Caco-2 (cell line): ENCODE measurements at regions of chr11 and their contacts with region 1.

Region 1: DNA sequence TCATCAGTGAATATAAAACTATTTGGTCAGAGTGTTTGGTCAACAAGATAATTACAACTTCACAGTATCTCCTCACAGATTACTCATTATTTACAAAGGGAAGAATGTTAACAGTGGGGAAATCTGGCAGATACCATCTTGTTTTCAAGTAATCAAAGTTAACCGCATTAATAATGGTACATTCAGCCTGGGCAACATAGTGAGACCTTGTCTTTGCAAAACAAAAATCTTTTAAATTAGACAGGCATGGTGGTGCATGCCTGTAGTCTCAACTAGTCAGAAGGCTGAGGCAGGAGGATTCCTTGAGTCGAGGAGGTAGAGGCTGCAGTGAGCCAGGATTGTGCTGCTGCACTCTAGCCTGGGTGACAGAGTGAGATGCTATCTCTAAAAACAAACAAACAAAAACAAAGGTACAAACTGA is 78.5 kb downstream of the ACER3 start:
- DNase-seq: no peak
- H3K4me3 ChIP-seq: no peak overlapping the region
- H3K4me3 Mint-ChIP-seq: no peak overlapping the region
- H3K27ac Mint-ChIP-seq: no peak overlapping the region
- H3K4me1 ChIP-seq: peaks cover 9% of the 10 kb centered on the region
- H3K4me1 Mint-ChIP-seq: peaks cover 30% of the 10 kb centered on the region
- H3K27me3 ChIP-seq: no peaks in the 10 kb centered on the region
- H3K27me3 Mint-ChIP-seq: no peaks in the 10 kb centered on the region
- CTCF ChIP-seq: no peak

Region 2: GRCh38 chr11:76850815-76851214 is 88.4 kb before region 1 on chr11:
- CTCF ChIA-PET with region 1: no interaction called
- POLR2A ChIA-PET with region 1: no interaction called
- intact Hi-C with region 1: no loop called
- DNase-seq: no peak
- H3K4me3 ChIP-seq: no peak overlapping the region
- H3K4me3 Mint-ChIP-seq: no peak overlapping the region
- H3K27ac Mint-ChIP-seq: no peak overlapping the region
- H3K4me1 ChIP-seq: peaks cover 11% of the 10 kb centered on the region
- H3K4me1 Mint-ChIP-seq: peaks cover 11% of the 10 kb centered on the region
- H3K27me3 ChIP-seq: no peaks in the 10 kb centered on the region
- H3K27me3 Mint-ChIP-seq: no peaks in the 10 kb centered on the region
- CTCF ChIP-seq: no peak

Region 3: DNA sequence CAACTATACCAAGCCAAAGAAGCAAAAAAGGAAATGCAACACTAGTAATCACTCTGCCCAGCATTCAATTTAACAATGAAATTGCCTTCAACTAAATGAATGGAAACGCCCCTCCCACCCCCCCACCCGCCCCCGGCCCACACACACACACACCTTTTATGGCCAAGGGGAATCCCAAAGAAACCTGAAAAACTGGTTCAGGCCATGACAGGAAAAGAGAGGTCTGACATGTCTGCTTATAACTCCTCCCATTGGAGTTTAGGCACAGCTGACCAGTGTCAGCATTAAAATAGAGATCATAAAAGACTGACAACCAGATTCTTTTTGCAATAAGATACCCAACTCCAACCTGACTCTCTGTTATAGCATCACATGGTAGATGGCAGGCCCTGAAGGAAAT is 35.9 kb before region 1 on chr11:
- CTCF ChIA-PET with region 1: no interaction called
- POLR2A ChIA-PET with region 1: no interaction called
- intact Hi-C with region 1: no loop called
- DNase-seq: peak; percentile 84 to 85
- H3K4me3 ChIP-seq: no peak overlapping the region
- H3K4me3 Mint-ChIP-seq: no peak overlapping the region
- H3K27ac Mint-ChIP-seq: no peak overlapping the region
- H3K4me1 ChIP-seq: peaks cover 22% of the 10 kb centered on the region
- H3K4me1 Mint-ChIP-seq: peaks cover 20% of the 10 kb centered on the region
- H3K27me3 ChIP-seq: no peaks in the 10 kb centered on the region
- H3K27me3 Mint-ChIP-seq: no peaks in the 10 kb centered on the region
- CTCF ChIP-seq: no peak

Region 4: GRCh38 chr11:77035039-77035994 is 96.1 kb after region 1 on chr11:
- CTCF ChIA-PET with region 1: no interaction called
- POLR2A ChIA-PET with region 1: no interaction called
- intact Hi-C with region 1: loop called (anchors 1 kb)
- DNase-seq: peak in 1 of 2 experiments; percentile 46
- H3K4me3 ChIP-seq: no peak overlapping the region
- H3K4me3 Mint-ChIP-seq: peak overlapping the region; percentile 31
- H3K27ac Mint-ChIP-seq: no peak overlapping the region
- H3K4me1 ChIP-seq: peaks cover 28% of the 10 kb centered on the region
- H3K4me1 Mint-ChIP-seq: peaks cover 36% of the 10 kb centered on the region
- H3K27me3 ChIP-seq: no peaks in the 10 kb centered on the region
- H3K27me3 Mint-ChIP-seq: no peaks in the 10 kb centered on the region
- CTCF ChIP-seq: no peak